Vagina (tissue), 2 donors: ENCODE measurements at regions of chr20 and their contacts with region 1.

Region 1: DNA sequence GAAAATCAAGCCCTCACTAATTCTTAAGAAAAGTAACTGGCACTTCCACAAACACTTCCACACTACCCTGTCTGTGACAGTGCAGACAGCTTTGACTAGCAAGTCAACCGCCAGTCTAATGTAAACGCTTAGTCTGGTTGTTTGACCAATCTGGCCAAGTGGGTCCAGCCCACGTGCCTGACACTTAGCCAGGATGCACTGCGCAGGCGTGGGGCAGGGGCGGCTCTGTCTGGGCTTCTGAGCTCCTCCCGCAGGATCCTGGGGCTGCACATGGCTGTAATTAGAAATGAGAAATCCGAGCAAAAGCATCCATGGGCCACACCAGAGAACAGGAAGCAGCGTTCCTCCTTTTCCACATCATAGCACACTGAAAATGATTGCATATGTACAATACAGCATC is 424.1 kb downstream of the FOXA2 start:
- DNase-seq: no peak
- H3K4me3 ChIP-seq: no peak overlapping the region
- H3K27ac ChIP-seq: no peak overlapping the region
- H3K4me1 ChIP-seq: no peaks in the 10 kb centered on the region
- H3K27me3 ChIP-seq: no peaks in the 10 kb centered on the region
- CTCF ChIP-seq: no peak
- POLR2A ChIP-seq: no peak

Region 2: GRCh38 chr20:24034820-24035219 is 1874.6 kb after region 1 on chr20:
- intact Hi-C with region 1: loop called (anchors 5 kb)
- DNase-seq: no peak
- H3K4me3 ChIP-seq: no peak overlapping the region
- H3K27ac ChIP-seq: no peak overlapping the region
- H3K4me1 ChIP-seq: no peaks in the 10 kb centered on the region
- H3K27me3 ChIP-seq: no peaks in the 10 kb centered on the region
- CTCF ChIP-seq: no peak
- POLR2A ChIP-seq: no peak